ENCODE measurements at regions of chr7 and their contacts with region 1.

Region 1: GRCh38 chr7:76108540-76109241 is 60.8 kb downstream of the MDH2 start:
- DNase-seq: peak; percentile 43 to 86 (median 81)
- H3K4me3 ChIP-seq: no peak overlapping the region
- H3K27ac ChIP-seq: peak overlapping the region in 4 of 5 donors; percentile 35 to 81 (median 65)
- H3K4me1 ChIP-seq: peaks cover 10 to 20% of the 10 kb centered on the region in 2 donors
- H3K27me3 ChIP-seq: no peaks in the 10 kb centered on the region
- CTCF ChIP-seq: no peak
- POLR2A ChIP-seq: peak in 1 of 2 donors; percentile 22

Region 2: DNA sequence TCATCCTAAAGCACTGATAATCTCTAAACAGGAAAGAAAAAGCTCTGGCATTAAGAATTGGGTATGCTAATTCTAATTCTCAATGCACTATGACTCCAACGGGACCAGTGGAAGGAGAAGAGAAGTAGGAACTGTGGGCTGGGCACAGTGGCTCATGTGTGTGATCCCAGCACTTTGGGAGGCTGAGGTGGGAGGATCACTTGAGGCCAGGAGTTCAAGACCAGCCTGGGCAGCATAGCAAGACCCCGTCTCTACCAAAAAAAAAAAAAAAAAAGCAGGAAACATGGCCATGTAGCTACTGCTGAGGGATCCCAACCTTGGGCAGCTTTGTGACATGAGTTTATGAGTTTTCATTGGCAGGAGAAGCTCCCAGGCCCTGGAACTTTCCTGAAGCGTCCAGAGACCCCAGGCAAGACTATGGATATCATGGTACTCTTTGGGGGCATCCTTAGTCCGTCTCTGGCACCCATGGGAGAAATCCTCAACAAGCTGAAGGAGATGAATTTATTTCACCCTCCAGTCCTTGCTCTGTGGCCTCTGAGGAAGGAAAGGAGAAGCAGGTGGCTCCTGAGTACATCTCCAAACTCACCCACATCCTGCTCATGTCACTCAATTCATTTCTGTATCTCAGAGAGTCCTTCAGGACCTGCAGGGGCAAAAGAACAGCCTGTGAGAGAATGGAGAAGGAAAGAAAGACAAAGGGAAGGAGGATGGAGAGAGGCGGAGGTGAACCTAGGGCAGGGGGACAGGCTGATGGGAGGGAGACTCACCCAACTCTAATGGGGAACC is 517.0 kb before region 1 on chr7:
- intact Hi-C with region 1: no loop called
- DNase-seq: no peak
- H3K4me3 ChIP-seq: no peak overlapping the region
- H3K27ac ChIP-seq: no peak overlapping the region
- H3K4me1 ChIP-seq: peaks cover 0 to 3% of the 10 kb centered on the region in 2 donors
- H3K27me3 ChIP-seq: no peaks in the 10 kb centered on the region
- CTCF ChIP-seq: no peak
- POLR2A ChIP-seq: no peak

Region 3: GRCh38 chr7:76071316-76072242 is 37.1 kb before region 1 on chr7:
- intact Hi-C with region 1: loop called in 1 of 2 experiments (anchors 5 kb)
- DNase-seq: no peak
- H3K4me3 ChIP-seq: no peak overlapping the region
- H3K27ac ChIP-seq: no peak overlapping the region
- H3K4me1 ChIP-seq: peaks cover 0 to 10% of the 10 kb centered on the region in 2 donors
- H3K27me3 ChIP-seq: no peaks in the 10 kb centered on the region
- CTCF ChIP-seq: no peak
- POLR2A ChIP-seq: no peak

Region 4: GRCh38 chr7:76272851-76273497 is 164.3 kb after region 1 on chr7:
- intact Hi-C with region 1: no loop called
- DNase-seq: no peak
- H3K4me3 ChIP-seq: no peak overlapping the region
- H3K27ac ChIP-seq: no peak overlapping the region
- H3K4me1 ChIP-seq: no peaks in the 10 kb centered on the region
- H3K27me3 ChIP-seq: no peaks in the 10 kb centered on the region
- CTCF ChIP-seq: no peak
- POLR2A ChIP-seq: no peak

Measured in adrenal gland (tissue), 19 donors.